ENCODE measurements at regions of chr14 and their contacts with region 1.

Region 1: DNA sequence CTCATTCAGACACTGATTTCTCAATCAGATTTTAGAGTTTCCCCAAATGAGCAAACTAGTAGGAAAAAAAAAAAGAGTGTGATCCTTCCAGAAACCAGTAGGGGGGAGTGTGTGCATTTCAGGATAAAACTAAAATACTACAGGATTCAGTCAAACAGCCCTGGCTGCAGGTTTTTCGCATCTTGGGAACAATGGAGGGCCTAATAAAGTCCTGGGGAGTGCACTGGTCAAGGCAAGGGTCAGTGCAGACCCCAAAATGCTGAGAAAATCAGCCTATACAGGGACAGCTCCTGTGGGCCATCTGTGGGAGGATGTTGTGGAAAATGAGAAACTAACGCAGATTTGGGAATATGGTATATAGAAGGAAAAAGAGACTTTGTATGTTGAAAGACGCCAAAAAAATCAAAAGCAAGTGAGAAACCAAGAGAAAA is 22.2 kb upstream of the ABCD4 start:
- DNase-seq: peak; percentile 59
- CTCF ChIP-seq: peak; percentile 31

Region 2: GRCh38 chr14:74804219-74804826 is 479.4 kb after region 1 on chr14:
- in situ Hi-C with region 1: loop called (anchors 25 kb)
- DNase-seq: peak; percentile 40
- CTCF ChIP-seq: peak; percentile 51

Measured in GM13976 (cell line).